AG04450 (cell line): ENCODE measurements at regions of chr6 and their contacts with region 1.

Region 1: DNA sequence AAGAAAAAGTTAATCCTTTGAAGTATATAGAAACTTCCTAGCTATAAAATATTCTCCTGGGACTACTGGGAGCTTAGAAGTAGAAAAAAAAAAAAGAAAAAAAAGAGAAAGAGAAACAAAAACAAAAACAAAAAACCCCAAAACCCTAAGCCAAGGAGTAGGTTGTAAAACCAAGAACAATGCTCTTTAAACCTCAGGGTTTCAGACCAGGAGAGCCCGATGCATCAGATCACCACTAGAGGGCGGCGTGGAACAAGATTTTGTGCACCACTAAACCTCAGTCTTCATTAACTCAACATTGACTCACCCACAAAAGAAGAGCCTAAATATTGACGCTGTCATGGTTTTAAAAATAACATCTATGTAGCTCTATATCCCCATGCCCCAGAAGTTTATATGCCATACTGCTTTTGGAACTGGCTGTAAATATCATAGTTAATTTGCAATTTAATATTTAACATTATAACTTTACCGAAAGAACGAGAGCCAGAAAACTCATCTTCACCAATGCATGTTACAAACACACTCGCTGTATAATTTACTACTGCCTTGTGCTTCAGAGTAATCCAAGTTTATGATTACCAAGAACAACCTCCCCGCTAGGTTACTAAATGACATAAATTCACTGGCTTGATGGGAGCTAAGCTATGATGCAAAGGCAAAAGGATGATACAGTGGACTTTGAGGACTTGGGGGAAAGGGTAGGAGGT is 19.2 kb downstream of the MCUR1 start:
- DNase-seq: peak; percentile 56
- H3K4me3 ChIP-seq: no peak overlapping the region
- H3K27ac ChIP-seq: no peak overlapping the region
- H3K27me3 ChIP-seq: no peaks in the 10 kb centered on the region
- CTCF ChIP-seq: peak; percentile 95

Region 2: GRCh38 chr6:13614926-13615798 is 180.0 kb before region 1 on chr6 and contains the start of gene NOL7:
- CTCF ChIA-PET with region 1: interaction called, 29 read pairs
- POLR2A ChIA-PET with region 1: interaction called, 3 read pairs
- DNase-seq: peak; percentile 98
- H3K4me3 ChIP-seq: peak within 1 kb of the TSS; percentile 98
- H3K27ac ChIP-seq: peak within 1 kb of the TSS; percentile 94
- H3K27me3 ChIP-seq: no peaks in the 10 kb centered on the region
- CTCF ChIP-seq: peak; percentile 87
- polyA plus RNA-seq, gene NOL7: 31.3 and 46.6 TPM in 2 replicates

Region 3: GRCh38 chr6:13733178-13733887 is 61.9 kb before region 1 on chr6:
- CTCF ChIA-PET with region 1: interaction called, 21 read pairs
- POLR2A ChIA-PET with region 1: no interaction called
- DNase-seq: peak; percentile 93
- H3K4me3 ChIP-seq: peak overlapping the region; percentile 41
- H3K27ac ChIP-seq: peak overlapping the region; percentile 82
- H3K27me3 ChIP-seq: no peaks in the 10 kb centered on the region
- CTCF ChIP-seq: no peak

Region 4: DNA sequence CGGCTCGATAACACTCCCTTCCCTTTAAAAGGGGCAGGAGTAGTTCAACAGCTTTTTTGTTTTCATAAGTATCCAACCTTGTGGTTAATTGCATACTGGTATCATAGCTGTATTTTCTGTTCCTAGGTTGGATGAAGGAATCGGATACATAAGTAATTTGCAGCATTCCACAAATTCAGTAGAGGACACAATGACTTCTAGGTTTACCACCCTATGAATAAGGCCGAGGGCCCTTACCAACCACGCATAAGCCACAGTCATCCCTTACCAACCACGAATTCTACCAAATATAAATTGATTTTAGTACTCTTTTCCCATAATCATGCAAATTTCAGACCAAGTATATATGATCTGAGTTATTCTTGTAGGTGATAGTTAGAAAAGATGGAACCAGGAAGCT is 17.2 kb before region 1 on chr6:
- CTCF ChIA-PET with region 1: interaction called, 38 read pairs
- POLR2A ChIA-PET with region 1: no interaction called
- DNase-seq: no peak
- H3K4me3 ChIP-seq: no peak overlapping the region
- H3K27ac ChIP-seq: no peak overlapping the region
- H3K27me3 ChIP-seq: no peaks in the 10 kb centered on the region
- CTCF ChIP-seq: no peak

Region 5: GRCh38 chr6:13908955-13909381 is 113.8 kb after region 1 on chr6:
- CTCF ChIA-PET with region 1: interaction called, 25 read pairs
- POLR2A ChIA-PET with region 1: no interaction called
- DNase-seq: peak; percentile 45
- H3K4me3 ChIP-seq: no peak overlapping the region
- H3K27ac ChIP-seq: no peak overlapping the region
- H3K27me3 ChIP-seq: peaks cover 5% of the 10 kb centered on the region
- CTCF ChIP-seq: peak; percentile 89

Region 6: GRCh38 chr6:14144678-14145113 is 349.5 kb after region 1 on chr6:
- CTCF ChIA-PET with region 1: interaction called, 16 read pairs
- POLR2A ChIA-PET with region 1: no interaction called
- DNase-seq: peak; percentile 27
- H3K4me3 ChIP-seq: no peak overlapping the region
- H3K27ac ChIP-seq: no peak overlapping the region
- H3K27me3 ChIP-seq: peaks cover 25% of the 10 kb centered on the region
- CTCF ChIP-seq: peak; percentile 91